ENCODE measurements at regions of chr20 and their contacts with region 1.

Region 1: GRCh38 chr20:1392823-1393506 is at the start of gene FKBP1A:
- DNase-seq: peak; percentile 92
- H3K4me3 ChIP-seq: peak within 1 kb of the TSS; percentile 57 to 83 (median 73)
- H3K27ac ChIP-seq: peak within 1 kb of the TSS; percentile 69 to 97 (median 85)
- H3K4me1 ChIP-seq: peaks cover 41 to 46% of the 10 kb centered on the region in 2 donors
- H3K27me3 ChIP-seq: no peaks in the 10 kb centered on the region
- CTCF ChIP-seq: peak in 2 of 6 experiments; percentile 35 to 37
- POLR2A ChIP-seq: peak; percentile 91 to 98
- total RNA-seq, gene FKBP1A: 142 to 272 (median 189) TPM

Region 2: DNA sequence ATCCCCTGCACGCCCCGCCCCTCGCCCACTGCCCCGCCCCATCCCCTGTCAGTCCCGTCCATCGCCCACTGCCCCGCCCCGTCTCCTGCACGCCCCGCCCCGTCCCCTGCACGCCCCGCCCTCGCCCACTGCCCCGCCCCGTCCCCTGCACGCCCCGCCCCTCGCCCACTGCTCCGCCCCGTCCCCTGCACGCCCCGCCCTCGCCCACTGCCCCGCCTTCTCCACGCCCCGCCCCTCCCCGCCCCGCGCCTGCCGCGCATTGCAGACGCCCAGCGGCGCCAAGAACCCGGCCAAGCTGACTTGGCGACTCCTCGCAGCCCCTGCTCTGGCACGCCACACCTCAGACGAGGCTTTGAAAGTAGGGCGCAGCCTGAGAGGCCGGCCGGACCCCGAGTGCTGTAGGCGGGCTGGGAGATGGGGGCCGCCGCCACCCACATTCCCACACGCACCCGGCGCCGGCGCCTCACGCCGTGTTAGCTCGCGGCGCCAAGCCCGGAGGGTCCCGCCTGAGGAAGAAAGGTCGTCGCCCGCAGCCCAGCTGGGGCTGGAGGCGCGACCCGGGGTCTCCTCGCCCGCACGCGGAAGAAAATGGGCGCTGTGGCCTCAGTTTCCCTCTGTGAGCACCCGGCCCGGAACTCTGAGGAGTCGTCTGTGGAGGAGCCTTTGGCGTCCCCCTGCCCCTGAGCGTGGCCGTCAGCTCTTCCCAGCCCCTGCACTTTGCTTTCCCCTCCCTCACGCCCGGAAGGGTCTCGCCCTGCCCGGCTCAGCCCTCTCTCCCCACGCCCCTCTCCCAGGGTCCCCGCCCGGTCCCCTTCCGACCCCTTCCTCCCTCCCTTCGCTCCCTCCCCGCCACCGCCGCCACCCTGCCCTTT is 166.9 kb before region 1 on chr20 and contains the start of gene RAD21L1:
- intact Hi-C with region 1: no loop called
- DNase-seq: peak; percentile 75 to 77
- H3K4me3 ChIP-seq: peak within 1 kb of the TSS; percentile 37 to 64 (median 59)
- H3K27ac ChIP-seq: peak within 1 kb of the TSS in 1 of 3 donors; percentile 65
- H3K4me1 ChIP-seq: peaks cover 0 to 10% of the 10 kb centered on the region in 2 donors
- H3K27me3 ChIP-seq: no peaks in the 10 kb centered on the region
- CTCF ChIP-seq: no peak
- POLR2A ChIP-seq: peak in 1 of 2 donors; percentile 53
- total RNA-seq, gene RAD21L1: not detected

Region 3: GRCh38 chr20:1313236-1313964 is 79.6 kb before region 1 on chr20:
- intact Hi-C with region 1: loop called (anchors 5 kb)
- DNase-seq: peak; percentile 70 to 78
- H3K4me3 ChIP-seq: no peak overlapping the region
- H3K27ac ChIP-seq: peak overlapping the region in 1 of 3 donors; percentile 11
- H3K4me1 ChIP-seq: peaks cover 0 to 12% of the 10 kb centered on the region in 2 donors
- H3K27me3 ChIP-seq: no peaks in the 10 kb centered on the region
- CTCF ChIP-seq: peak; percentile 92 to 98 (median 95)
- POLR2A ChIP-seq: no peak

Region 4: GRCh38 chr20:1325173-1326030 is 67.6 kb before region 1 on chr20:
- intact Hi-C with region 1: loop called (anchors 2 kb)
- DNase-seq: peak; percentile 97
- H3K4me3 ChIP-seq: peak overlapping the region in 2 of 3 donors; percentile 68 to 88
- H3K27ac ChIP-seq: peak overlapping the region; percentile 95 to 99 (median 97)
- H3K4me1 ChIP-seq: peaks cover 59 to 84% of the 10 kb centered on the region in 2 donors
- H3K27me3 ChIP-seq: no peaks in the 10 kb centered on the region
- CTCF ChIP-seq: peak in 3 of 6 experiments; percentile 26 to 39 (median 30)
- POLR2A ChIP-seq: peak; percentile 84 to 92

Measured in thyroid gland (tissue), 4 donors.